Ascending aorta (tissue), 2 donors: ENCODE measurements at regions of chr11 and their contacts with region 1.

Region 1: DNA sequence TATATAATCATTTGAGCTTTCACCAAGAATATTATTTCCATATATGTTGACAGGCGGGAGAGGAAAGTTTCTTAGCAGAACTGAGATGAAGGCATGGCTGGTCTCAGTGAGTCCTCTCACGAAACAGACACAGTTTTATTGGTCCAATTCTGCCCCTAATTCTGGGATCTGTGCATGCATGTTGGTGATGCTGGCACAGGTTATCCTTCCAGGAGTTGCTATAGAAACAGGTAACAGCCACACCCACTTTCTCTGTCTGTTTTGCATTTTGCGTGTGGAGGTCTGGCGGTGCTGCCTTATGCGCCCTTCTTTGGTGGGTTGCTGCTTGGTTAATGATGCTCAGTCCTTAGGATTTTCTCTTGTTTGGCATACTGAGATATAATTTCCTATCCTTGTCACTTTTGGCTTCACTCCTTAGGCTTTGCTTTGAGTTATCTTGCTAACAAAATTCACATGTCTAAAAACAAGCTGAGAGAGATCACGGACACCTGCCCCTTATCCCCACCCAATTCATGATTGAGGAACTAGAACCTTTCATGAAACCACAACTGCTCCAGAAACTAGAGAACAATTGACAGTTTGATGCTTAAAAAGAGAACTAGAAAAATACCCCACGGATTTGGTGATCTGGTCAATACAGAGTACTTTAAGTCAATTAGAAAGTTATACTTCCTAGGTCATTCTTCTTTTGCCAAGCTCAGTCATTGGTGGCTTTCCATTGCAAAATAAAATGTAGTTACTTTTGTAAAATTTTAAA is 189.3 kb downstream of the FAT3 start:
- DNase-seq: no peak
- H3K4me3 ChIP-seq: no peak overlapping the region
- H3K27ac ChIP-seq: peak overlapping the region; percentile 61 to 78
- H3K4me1 ChIP-seq: peaks cover 0 to 3% of the 10 kb centered on the region in 2 donors
- H3K27me3 ChIP-seq: no peaks in the 10 kb centered on the region
- CTCF ChIP-seq: no peak

Region 2: DNA sequence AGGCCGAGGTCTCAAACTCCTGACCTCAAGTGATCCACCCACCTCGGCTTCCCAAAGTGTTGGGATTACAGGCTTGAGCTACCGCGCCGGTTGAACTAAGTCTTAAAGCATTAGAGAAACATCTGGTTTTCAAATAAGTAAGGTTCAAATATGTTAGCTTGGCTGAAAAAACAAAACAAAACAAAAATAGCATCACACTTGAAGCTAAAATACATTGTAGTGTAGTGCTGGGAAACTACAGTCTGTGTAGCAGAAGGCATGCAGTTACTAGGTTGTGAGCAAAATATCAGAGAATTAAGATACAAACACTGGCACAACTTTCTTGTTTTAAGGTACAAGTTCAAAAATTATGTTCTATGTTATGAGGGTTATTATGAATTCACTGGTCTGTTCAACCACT is 1966.3 kb before region 1 on chr11:
- intact Hi-C with region 1: loop called (anchors 10 kb)
- DNase-seq: no peak
- H3K4me3 ChIP-seq: no peak overlapping the region
- H3K27ac ChIP-seq: peak overlapping the region; percentile 22 to 65
- H3K4me1 ChIP-seq: peaks cover 0 to 5% of the 10 kb centered on the region in 2 donors
- H3K27me3 ChIP-seq: no peaks in the 10 kb centered on the region
- CTCF ChIP-seq: no peak

Region 3: DNA sequence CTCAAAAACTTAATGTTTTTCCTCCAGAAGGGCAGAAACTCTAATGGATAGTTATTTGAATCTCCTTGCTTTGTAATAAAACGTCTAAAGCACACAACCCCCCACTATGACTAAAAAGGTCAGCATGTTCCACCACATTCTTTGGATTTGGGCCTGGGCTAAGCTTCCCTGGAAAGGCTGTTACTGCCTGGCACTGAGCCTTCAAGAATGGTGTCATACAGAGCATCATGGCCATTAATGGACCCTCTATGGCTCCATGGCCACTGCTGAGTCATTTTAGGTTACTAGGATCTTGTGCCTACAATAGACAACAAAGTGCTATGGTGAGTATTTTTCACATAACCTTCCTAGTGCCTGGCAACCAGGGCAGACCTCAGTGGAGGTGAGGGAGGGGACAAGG is 431.9 kb before region 1 on chr11:
- intact Hi-C with region 1: loop called (anchors 10 kb)
- DNase-seq: peak; percentile 61 to 94
- H3K4me3 ChIP-seq: no peak overlapping the region
- H3K27ac ChIP-seq: peak overlapping the region; percentile 68 to 85
- H3K4me1 ChIP-seq: peaks cover 0 to 5% of the 10 kb centered on the region in 2 donors
- H3K27me3 ChIP-seq: no peaks in the 10 kb centered on the region
- CTCF ChIP-seq: no peak

Region 4: GRCh38 chr11:92224407-92225124 is 189.4 kb before region 1 on chr11 and contains the start of gene FAT3:
- intact Hi-C with region 1: loop called (anchors 10 kb)
- DNase-seq: peak in 1 of 2 donors; percentile 70
- H3K4me3 ChIP-seq: peak within 1 kb of the TSS; percentile 54 to 82
- H3K27ac ChIP-seq: peak within 1 kb of the TSS; percentile 60 to 61
- H3K4me1 ChIP-seq: no peaks in the 10 kb centered on the region
- H3K27me3 ChIP-seq: no peaks in the 10 kb centered on the region
- CTCF ChIP-seq: no peak
- total RNA-seq, gene FAT3: 2.8 TPM

Region 5: GRCh38 chr11:92383430-92383829 is 30.5 kb before region 1 on chr11:
- intact Hi-C with region 1: no loop called
- DNase-seq: no peak
- H3K4me3 ChIP-seq: no peak overlapping the region
- H3K27ac ChIP-seq: no peak overlapping the region
- H3K4me1 ChIP-seq: peaks cover 0 to 5% of the 10 kb centered on the region in 2 donors
- H3K27me3 ChIP-seq: no peaks in the 10 kb centered on the region
- CTCF ChIP-seq: no peak

Region 6: GRCh38 chr11:92480499-92480898 is 66.6 kb after region 1 on chr11:
- intact Hi-C with region 1: no loop called
- DNase-seq: no peak
- H3K4me3 ChIP-seq: no peak overlapping the region
- H3K27ac ChIP-seq: no peak overlapping the region
- H3K4me1 ChIP-seq: no peaks in the 10 kb centered on the region
- H3K27me3 ChIP-seq: no peaks in the 10 kb centered on the region
- CTCF ChIP-seq: no peak

Region 7: DNA sequence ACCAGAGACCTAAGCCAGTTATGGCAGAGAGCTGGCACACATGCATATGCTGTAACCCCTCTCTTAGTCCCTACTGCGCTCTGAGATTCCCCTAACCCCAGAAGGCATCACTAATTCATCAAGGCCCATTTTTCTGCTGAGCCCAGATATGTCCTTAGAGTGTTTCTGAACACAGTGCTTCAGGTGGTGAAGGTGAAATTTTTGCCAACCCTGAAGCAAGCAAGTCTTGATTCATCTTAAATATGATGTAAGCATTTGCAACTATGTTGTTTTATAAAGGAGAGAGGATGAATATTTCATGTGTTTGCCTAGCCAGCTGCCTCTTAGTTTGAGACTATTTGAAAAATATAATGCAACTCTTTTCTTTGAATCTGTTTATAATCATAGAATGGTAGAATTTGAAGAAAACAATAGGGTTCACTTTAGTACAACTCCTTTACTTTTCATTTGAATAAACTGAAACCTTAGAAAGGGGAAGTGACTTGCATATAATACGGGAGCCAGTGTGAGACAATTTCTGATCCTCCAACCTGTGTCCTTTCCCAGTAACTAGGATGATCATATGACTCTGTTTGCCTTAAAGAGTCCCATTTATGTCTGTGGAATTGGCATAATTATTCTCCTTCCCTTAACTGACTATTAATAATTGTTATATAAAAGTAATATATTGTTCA is 361.2 kb after region 1 on chr11:
- intact Hi-C with region 1: no loop called
- DNase-seq: no peak
- H3K4me3 ChIP-seq: no peak overlapping the region
- H3K27ac ChIP-seq: no peak overlapping the region
- H3K4me1 ChIP-seq: no peaks in the 10 kb centered on the region
- H3K27me3 ChIP-seq: no peaks in the 10 kb centered on the region
- CTCF ChIP-seq: no peak